AG04449 (cell line): ENCODE measurements at regions of chr9 and their contacts with region 1.

Region 1: GRCh38 chr9:128203024-128203706 is at the start of gene DNM1:
- DNase-seq: no peak
- H3K4me3 ChIP-seq: peak within 1 kb of the TSS; percentile 84
- CTCF ChIP-seq: peak; percentile 64

Region 2: DNA sequence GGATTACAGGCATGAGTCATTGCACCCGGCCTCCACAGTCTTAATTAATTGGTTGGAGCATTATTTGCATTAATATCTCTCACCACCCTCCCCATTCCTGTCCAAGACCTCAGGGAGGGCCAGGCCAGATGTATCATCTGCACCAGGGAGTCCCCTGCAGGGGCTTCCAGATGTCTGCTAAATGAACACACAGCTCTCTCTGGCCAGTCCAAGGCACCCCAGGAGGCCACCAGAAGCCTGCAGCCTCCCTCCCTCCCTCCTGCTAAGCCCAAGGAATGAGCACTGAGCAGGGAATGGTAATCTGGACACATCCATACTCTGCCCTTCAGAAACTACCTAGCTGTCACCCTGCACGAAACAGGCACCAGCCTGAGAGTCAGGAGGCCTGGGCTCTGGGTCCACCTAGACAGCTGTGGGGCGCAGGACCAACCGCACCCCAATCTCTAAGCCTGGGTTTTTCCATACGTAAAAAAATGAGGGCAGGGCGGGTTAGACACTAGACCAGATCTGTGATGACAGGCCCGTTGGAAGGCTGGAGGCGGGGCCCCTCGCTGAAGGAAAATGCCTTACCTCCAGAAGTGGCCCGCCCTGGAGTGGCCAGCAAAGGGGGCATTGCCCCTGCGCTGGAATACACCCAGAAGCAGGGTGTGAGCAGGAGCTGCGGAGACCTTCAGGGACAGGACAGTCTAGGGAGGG is 20.1 kb before region 1 on chr9:
- CTCF ChIA-PET with region 1: interaction called, 10 read pairs
- POLR2A ChIA-PET with region 1: no interaction called
- DNase-seq: no peak
- H3K4me3 ChIP-seq: no peak overlapping the region
- CTCF ChIP-seq: no peak

Region 3: GRCh38 chr9:128191406-128192046 is 11.6 kb before region 1 on chr9 and contains the start of gene CIZ1:
- CTCF ChIA-PET with region 1: interaction called, 33 read pairs
- POLR2A ChIA-PET with region 1: no interaction called
- DNase-seq: no peak
- H3K4me3 ChIP-seq: peak within 1 kb of the TSS; percentile 82
- CTCF ChIP-seq: peak; percentile 80

Region 4: DNA sequence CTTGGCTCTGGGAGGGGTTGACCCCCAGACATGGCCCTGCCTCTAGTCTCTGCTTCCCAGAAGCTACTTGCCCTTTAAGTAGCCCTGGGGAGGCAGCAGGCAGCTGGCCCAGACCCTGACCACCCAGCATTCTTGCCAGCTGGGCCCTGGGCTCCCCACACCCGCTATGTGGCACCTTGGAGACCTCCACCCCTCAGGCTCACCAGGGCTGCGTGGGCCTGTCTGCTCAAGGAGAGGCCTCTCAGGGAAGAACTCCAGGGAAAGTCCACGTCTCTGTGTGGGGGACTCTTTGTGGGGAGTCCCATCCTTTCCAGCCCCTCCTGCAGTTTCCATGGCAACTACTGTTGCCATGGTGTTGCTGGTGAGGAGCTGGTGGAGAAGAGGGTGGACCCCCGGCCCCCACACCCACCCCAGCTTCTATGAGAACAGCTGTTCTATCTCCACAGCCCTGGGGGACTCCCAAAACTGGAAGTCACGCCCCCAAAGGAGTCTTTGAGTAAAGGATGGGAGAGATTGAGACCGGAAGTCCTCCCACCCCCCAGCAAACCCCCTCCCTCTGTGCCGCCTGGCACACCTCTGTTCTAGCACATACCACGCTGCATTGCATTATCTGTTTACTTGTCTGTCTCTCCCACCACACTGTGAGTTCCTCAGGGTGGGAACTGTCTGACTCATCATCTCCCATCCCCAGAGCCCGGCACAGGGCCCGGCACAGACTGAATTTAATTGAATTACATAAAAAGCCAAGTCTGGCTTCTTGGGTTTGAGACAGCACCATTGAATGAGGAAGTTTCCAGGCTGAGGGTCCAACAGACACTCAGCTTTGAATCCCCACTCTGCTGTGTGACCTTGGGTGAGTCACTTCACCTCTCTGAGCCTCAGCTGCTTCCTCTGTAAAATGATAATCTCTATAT is 12.6 kb after region 1 on chr9:
- CTCF ChIA-PET with region 1: interaction called, 36 read pairs
- POLR2A ChIA-PET with region 1: no interaction called
- DNase-seq: peak; percentile 50
- H3K4me3 ChIP-seq: no peak overlapping the region
- CTCF ChIP-seq: no peak